ENCODE measurements at regions of chr17 and their contacts with region 1.

Region 1: GRCh38 chr17:43316522-43317142 is 82.2 kb upstream of the ARL4D start:
- DNase-seq: peak in 5 of 9 experiments; percentile 14 to 59 (median 49)
- ATAC-seq: no peak
- H3K4me3 ChIP-seq: no peak overlapping the region
- H3K4me3 Mint-ChIP-seq: peak overlapping the region; percentile 6
- H3K27ac ChIP-seq: no peak overlapping the region
- H3K27ac Mint-ChIP-seq: peak overlapping the region; percentile 41
- H3K4me1 ChIP-seq: no peaks in the 10 kb centered on the region
- H3K4me1 Mint-ChIP-seq: peaks cover 15% of the 10 kb centered on the region
- H3K27me3 ChIP-seq: no peaks in the 10 kb centered on the region
- H3K27me3 Mint-ChIP-seq: no peaks in the 10 kb centered on the region
- CTCF ChIP-seq: no peak

Region 2: GRCh38 chr17:43211480-43212402 is 104.9 kb before region 1 on chr17 and contains the start of gene TMEM106A:
- CTCF ChIA-PET with region 1: interaction called, 4 read pairs
- POLR2A ChIA-PET with region 1: interaction called, 93 read pairs
- intact Hi-C with region 1: loop called (anchors 1 kb)
- DNase-seq: peak; percentile 50 to 89 (median 76)
- ATAC-seq: peak; percentile 92
- H3K4me3 ChIP-seq: peak within 1 kb of the TSS; percentile 82 to 95
- H3K4me3 Mint-ChIP-seq: peak within 1 kb of the TSS; percentile 98
- H3K27ac ChIP-seq: peak within 1 kb of the TSS; percentile 75 to 82
- H3K27ac Mint-ChIP-seq: peak within 1 kb of the TSS; percentile 96
- H3K4me1 ChIP-seq: peaks cover 25% of the 10 kb centered on the region
- H3K4me1 Mint-ChIP-seq: peaks cover 40% of the 10 kb centered on the region
- H3K27me3 ChIP-seq: no peaks in the 10 kb centered on the region
- H3K27me3 Mint-ChIP-seq: no peaks in the 10 kb centered on the region
- CTCF ChIP-seq: peak; percentile 58
- total RNA-seq, gene TMEM106A: 8.9 to 9.2 TPM

Region 3: DNA sequence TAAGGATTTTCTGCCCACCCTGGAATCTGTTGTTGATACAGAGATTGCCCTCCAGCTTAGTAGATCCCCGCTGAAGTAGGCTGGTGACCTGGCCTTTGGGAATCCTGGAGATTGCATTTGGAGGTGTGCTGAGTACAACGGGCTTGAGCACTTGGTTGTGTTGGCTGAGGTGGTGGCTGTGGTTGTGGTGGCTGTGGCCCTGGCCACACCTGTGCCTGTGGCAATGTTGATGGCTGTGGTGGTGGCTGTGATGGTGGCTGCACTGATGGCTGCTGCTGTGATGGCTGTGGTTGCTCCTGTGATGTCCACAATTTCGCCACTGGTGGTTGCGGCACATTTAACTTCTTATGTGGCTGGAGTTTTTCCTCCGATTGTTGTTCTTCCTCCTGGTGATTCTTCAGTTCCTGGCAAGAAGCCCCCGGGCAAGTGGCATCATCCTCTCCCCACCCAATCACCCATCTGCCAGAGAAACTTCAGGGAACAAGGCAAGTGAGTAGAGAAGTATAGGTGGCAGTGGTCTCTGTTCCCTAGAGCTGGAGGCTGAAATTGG is 92.4 kb before region 1 on chr17:
- CTCF ChIA-PET with region 1: no interaction called
- POLR2A ChIA-PET with region 1: interaction called, 10 read pairs
- intact Hi-C with region 1: no loop called
- DNase-seq: no peak
- ATAC-seq: no peak
- H3K4me3 ChIP-seq: no peak overlapping the region
- H3K4me3 Mint-ChIP-seq: no peak overlapping the region
- H3K27ac ChIP-seq: no peak overlapping the region
- H3K27ac Mint-ChIP-seq: no peak overlapping the region
- H3K4me1 ChIP-seq: no peaks in the 10 kb centered on the region
- H3K4me1 Mint-ChIP-seq: peaks cover 8% of the 10 kb centered on the region
- H3K27me3 ChIP-seq: no peaks in the 10 kb centered on the region
- H3K27me3 Mint-ChIP-seq: no peaks in the 10 kb centered on the region
- CTCF ChIP-seq: no peak

Region 4: DNA sequence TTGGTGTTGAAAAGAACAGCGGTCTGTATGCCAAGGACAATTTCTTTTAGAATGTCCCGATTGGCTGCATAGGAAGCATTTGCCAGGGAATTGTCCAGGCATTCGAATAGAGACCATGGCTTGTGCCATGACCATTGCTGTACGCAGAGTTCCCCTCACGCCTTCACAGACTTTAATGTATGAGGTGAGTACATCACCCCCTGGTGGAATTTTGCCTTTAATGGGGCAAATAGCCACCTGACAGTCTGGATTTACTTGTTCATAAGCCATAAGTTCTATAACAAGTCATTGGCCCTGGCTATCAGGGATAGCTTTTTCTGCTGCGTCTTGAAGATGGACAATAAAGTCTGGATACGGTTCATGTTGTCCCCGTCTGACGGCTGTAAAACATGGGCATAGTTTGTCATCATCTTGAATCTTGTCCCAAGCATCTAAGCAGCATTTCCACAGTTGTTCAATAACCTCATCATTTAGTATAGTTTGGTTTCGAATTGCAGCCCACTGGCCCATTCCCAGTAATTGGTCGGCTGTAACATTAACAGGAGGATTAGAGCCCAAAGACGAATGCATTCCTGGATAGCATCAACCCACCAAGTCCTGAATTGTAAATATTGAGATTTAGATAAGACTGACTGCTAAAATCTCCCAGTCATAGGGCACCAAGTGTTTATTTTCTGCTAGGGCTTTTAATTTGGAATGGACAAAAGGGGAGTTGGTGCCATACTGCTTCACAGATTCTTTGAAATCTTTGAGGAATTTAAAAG is 14.4 kb after region 1 on chr17:
- CTCF ChIA-PET with region 1: interaction called, 182 read pairs
- POLR2A ChIA-PET with region 1: interaction called, 22 read pairs
- intact Hi-C with region 1: no loop called
- DNase-seq: no peak
- ATAC-seq: no peak
- H3K4me3 ChIP-seq: no peak overlapping the region
- H3K4me3 Mint-ChIP-seq: no peak overlapping the region
- H3K27ac ChIP-seq: no peak overlapping the region
- H3K27ac Mint-ChIP-seq: no peak overlapping the region
- H3K4me1 ChIP-seq: peaks cover 7% of the 10 kb centered on the region
- H3K4me1 Mint-ChIP-seq: peaks cover 7% of the 10 kb centered on the region
- H3K27me3 ChIP-seq: no peaks in the 10 kb centered on the region
- H3K27me3 Mint-ChIP-seq: peaks cover 15% of the 10 kb centered on the region
- CTCF ChIP-seq: no peak

Region 5: DNA sequence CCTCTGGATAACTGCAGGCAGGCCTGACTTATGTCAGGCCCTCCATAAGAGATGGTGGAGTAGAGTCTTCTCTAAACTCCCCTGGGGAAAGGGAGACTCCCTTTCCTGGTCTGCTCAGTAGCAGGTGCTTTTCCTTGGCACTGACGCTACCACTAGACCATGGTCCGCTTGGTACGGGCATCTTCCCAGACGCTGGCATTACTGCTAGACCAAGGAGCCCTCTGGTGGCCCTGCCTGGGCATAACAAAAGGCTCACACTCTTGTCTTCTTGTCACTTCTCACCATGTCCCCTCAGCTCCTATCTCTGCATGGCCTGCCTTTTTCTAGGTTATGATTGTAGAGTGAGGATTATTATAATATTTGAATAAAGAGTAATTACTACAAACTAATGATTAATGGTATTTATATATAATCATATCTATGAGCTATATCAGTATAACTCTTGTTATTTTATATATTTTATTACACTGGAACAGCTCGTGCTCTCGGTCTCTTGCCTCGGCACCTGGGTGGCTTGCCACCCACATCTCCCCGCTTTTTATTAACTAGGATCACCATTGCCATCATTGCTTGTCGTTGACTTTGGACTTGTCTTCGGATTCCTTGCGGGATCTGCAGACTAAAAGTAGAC is 22.4 kb after region 1 on chr17:
- CTCF ChIA-PET with region 1: interaction called, 182 read pairs
- POLR2A ChIA-PET with region 1: interaction called, 22 read pairs
- intact Hi-C with region 1: no loop called
- DNase-seq: peak; percentile 32 to 78 (median 62)
- ATAC-seq: peak; percentile 36
- H3K4me3 ChIP-seq: no peak overlapping the region
- H3K4me3 Mint-ChIP-seq: no peak overlapping the region
- H3K27ac ChIP-seq: no peak overlapping the region
- H3K27ac Mint-ChIP-seq: no peak overlapping the region
- H3K4me1 ChIP-seq: peaks cover 6% of the 10 kb centered on the region
- H3K4me1 Mint-ChIP-seq: peaks cover 8% of the 10 kb centered on the region
- H3K27me3 ChIP-seq: no peaks in the 10 kb centered on the region
- H3K27me3 Mint-ChIP-seq: no peaks in the 10 kb centered on the region
- CTCF ChIP-seq: peak; percentile 69

Region 6: GRCh38 chr17:43349142-43349541 is 32.5 kb after region 1 on chr17:
- CTCF ChIA-PET with region 1: no interaction called
- POLR2A ChIA-PET with region 1: no interaction called
- intact Hi-C with region 1: no loop called
- DNase-seq: no peak
- ATAC-seq: no peak
- H3K4me3 ChIP-seq: no peak overlapping the region
- H3K4me3 Mint-ChIP-seq: no peak overlapping the region
- H3K27ac ChIP-seq: no peak overlapping the region
- H3K27ac Mint-ChIP-seq: no peak overlapping the region
- H3K4me1 ChIP-seq: no peaks in the 10 kb centered on the region
- H3K4me1 Mint-ChIP-seq: no peaks in the 10 kb centered on the region
- H3K27me3 ChIP-seq: no peaks in the 10 kb centered on the region
- H3K27me3 Mint-ChIP-seq: peaks cover 6% of the 10 kb centered on the region
- CTCF ChIP-seq: no peak

Region 7: DNA sequence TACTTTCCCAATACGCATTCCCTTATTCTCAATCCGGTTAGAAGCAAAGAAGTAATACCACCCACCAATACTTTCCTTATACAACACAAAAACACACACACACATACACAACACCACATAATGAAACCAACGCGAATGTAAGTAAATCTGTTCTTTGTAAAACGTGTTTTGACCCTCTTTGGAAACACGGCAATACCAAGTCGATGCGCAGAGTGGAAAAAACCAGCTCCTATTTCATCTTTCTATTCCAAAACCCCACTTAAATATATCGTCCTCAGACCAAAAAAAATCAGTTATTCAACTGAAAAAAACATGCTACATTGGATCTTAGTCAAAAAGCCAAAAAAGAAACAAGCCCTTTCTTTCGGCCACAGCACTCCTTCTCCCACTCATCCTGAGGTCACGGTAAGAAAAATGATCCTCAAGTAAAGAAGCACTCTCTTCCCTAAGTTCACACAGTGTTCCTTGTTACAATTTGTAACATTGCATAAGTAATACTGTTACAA is 51.2 kb after region 1 on chr17:
- CTCF ChIA-PET with region 1: interaction called, 3 read pairs
- POLR2A ChIA-PET with region 1: interaction called, 126 read pairs
- intact Hi-C with region 1: loop called in 1 of 2 experiments (anchors 2 kb)
- DNase-seq: peak in 5 of 9 experiments; percentile 16 to 86 (median 24)
- ATAC-seq: peak; percentile 57
- H3K4me3 ChIP-seq: peak overlapping the region; percentile 73 to 76
- H3K4me3 Mint-ChIP-seq: peak overlapping the region; percentile 97
- H3K27ac ChIP-seq: peak overlapping the region; percentile 97 to 98
- H3K27ac Mint-ChIP-seq: peak overlapping the region; percentile 100
- H3K4me1 ChIP-seq: peaks cover 20% of the 10 kb centered on the region
- H3K4me1 Mint-ChIP-seq: peaks cover 38% of the 10 kb centered on the region
- H3K27me3 ChIP-seq: no peaks in the 10 kb centered on the region
- H3K27me3 Mint-ChIP-seq: no peaks in the 10 kb centered on the region
- CTCF ChIP-seq: no peak

Region 8: GRCh38 chr17:43388359-43389045 is 71.9 kb after region 1 on chr17:
- CTCF ChIA-PET with region 1: no interaction called
- POLR2A ChIA-PET with region 1: interaction called, 27 read pairs
- intact Hi-C with region 1: no loop called
- DNase-seq: peak; percentile 88 to 96 (median 90)
- ATAC-seq: peak; percentile 71
- H3K4me3 ChIP-seq: peak overlapping the region; percentile 74 to 94
- H3K4me3 Mint-ChIP-seq: peak overlapping the region; percentile 89
- H3K27ac ChIP-seq: peak overlapping the region; percentile 94 to 96
- H3K27ac Mint-ChIP-seq: peak overlapping the region; percentile 97
- H3K4me1 ChIP-seq: peaks cover 14% of the 10 kb centered on the region
- H3K4me1 Mint-ChIP-seq: peaks cover 37% of the 10 kb centered on the region
- H3K27me3 ChIP-seq: no peaks in the 10 kb centered on the region
- H3K27me3 Mint-ChIP-seq: no peaks in the 10 kb centered on the region
- CTCF ChIP-seq: no peak

Region 9: DNA sequence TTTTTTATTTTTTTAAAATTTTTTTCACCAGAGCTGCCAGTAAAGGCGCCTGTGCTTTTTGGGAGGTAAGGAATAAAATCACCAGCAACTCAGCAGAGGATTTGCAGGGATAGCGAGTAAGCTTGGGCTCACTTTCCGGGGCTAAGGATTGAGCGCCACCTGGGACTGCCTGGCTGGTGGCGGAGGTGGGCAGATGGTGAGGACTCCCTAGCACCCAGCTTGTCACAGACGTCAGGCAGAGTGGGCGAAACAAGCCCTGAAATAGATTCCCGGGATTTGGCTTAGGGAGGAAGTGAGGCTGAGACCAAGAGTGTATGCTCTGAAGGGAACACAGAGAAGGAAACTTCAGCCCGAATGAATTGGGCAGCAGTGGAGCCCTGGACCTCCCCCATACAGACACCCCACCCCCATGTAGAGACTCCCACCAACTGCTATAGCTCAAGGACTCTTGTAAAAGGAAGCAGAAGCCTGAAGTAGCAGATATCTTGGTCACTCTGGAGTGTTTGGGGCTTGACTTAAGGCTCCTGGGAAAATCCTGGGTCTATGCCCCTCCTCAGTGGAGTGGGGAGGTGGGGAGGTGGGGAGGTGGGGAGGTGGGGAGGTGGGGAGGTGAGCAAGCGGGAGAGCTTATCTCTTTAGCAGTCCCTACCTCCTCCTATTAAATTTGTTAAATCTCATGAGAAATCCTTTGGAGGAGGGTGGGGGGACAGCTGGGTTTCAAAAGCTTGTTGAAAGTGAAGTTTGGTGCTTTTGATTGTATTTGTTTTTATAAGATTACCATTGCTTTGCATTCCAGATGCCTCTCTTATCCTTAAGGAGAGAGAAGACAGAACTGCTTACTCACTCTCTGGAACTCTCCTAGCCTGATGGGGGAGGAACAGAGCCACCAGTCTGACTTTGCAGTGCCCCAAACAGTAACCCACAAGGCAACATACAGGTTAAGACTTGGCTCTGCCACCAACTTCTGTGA is 90.3 kb after region 1 on chr17:
- CTCF ChIA-PET with region 1: no interaction called
- POLR2A ChIA-PET with region 1: no interaction called
- intact Hi-C with region 1: no loop called
- DNase-seq: no peak
- ATAC-seq: no peak
- H3K4me3 ChIP-seq: no peak overlapping the region
- H3K4me3 Mint-ChIP-seq: no peak overlapping the region
- H3K27ac ChIP-seq: no peak overlapping the region
- H3K27ac Mint-ChIP-seq: no peak overlapping the region
- H3K4me1 ChIP-seq: no peaks in the 10 kb centered on the region
- H3K4me1 Mint-ChIP-seq: no peaks in the 10 kb centered on the region
- H3K27me3 ChIP-seq: no peaks in the 10 kb centered on the region
- H3K27me3 Mint-ChIP-seq: peaks cover 3% of the 10 kb centered on the region
- CTCF ChIP-seq: no peak

Region 10: GRCh38 chr17:44451832-44452231 is 1135.2 kb after region 1 on chr17:
- CTCF ChIA-PET with region 1: no interaction called
- POLR2A ChIA-PET with region 1: no interaction called
- intact Hi-C with region 1: no loop called
- DNase-seq: no peak
- ATAC-seq: no peak
- H3K4me3 ChIP-seq: no peak overlapping the region
- H3K4me3 Mint-ChIP-seq: no peak overlapping the region
- H3K27ac ChIP-seq: no peak overlapping the region
- H3K27ac Mint-ChIP-seq: no peak overlapping the region
- H3K4me1 ChIP-seq: peaks cover 9% of the 10 kb centered on the region
- H3K4me1 Mint-ChIP-seq: peaks cover 23% of the 10 kb centered on the region
- H3K27me3 ChIP-seq: no peaks in the 10 kb centered on the region
- H3K27me3 Mint-ChIP-seq: no peaks in the 10 kb centered on the region
- CTCF ChIP-seq: no peak

Measured in CD8-positive, alpha-beta T cell (primary cell).